ENCODE measurements at regions of chr12 and their contacts with region 1.

Region 1: DNA sequence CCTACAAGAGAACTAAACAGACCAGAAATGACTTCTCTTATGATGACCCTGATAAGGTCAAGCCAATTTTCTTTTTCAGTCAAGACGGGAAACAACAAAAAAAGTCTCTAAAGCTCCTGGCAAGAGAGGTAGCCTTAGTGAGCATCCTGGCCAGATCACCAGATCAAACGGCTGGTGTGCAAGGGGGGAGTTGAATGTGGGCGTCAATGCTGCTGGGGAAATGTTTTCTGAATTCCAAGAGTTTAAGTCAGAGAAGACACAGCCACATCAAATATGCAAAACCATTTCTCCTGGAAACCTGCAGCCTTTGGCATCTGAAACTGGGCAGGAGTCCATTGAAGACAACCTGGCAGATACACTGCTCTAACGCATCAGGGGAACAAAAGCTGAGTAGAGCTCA is 16.0 kb upstream of the SELPLG start:
- DNase-seq: no peak
- ATAC-seq: no peak
- H3K4me3 ChIP-seq: no peak overlapping the region
- H3K27ac ChIP-seq: no peak overlapping the region
- H3K4me1 ChIP-seq: peaks cover 13% of the 10 kb centered on the region
- H3K27me3 ChIP-seq: no peaks in the 10 kb centered on the region
- CTCF ChIP-seq: no peak

Region 2: DNA sequence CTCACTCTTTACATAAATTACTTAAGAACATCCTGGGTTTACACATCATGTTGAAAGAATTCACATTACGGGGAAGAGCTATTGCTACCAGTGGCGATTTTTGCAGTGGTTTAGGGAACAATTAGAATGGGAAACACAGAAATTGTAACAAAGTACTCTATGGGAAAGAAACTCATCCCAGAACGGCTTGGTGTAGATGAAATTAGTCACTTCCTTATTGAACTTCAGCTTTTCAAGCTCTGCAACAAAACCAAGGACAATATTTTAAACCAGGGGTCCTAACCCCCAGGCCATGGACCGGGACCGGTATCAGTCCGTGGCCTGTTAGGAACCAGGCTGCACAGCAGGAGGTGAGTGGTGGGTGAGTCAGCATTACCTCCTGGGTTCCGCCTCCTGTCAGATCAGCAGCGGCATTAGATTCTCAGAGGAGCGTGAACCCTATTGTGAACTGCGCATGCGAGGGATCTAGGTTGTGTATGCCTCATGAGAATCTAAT is 166.9 kb before region 1 on chr12:
- CTCF ChIA-PET with region 1: no interaction called
- POLR2A ChIA-PET with region 1: no interaction called
- in situ Hi-C with region 1: no loop called
- intact Hi-C with region 1: no loop called
- DNase-seq: peak; percentile 20
- ATAC-seq: peak; percentile 81
- H3K4me3 ChIP-seq: peak overlapping the region in 1 of 2 experiments; percentile 39; a peak in 2 of 4 replicates
- H3K27ac ChIP-seq: peak overlapping the region; percentile 73
- H3K4me1 ChIP-seq: peaks cover 17% of the 10 kb centered on the region
- H3K27me3 ChIP-seq: no peaks in the 10 kb centered on the region
- CTCF ChIP-seq: no peak

Region 3: DNA sequence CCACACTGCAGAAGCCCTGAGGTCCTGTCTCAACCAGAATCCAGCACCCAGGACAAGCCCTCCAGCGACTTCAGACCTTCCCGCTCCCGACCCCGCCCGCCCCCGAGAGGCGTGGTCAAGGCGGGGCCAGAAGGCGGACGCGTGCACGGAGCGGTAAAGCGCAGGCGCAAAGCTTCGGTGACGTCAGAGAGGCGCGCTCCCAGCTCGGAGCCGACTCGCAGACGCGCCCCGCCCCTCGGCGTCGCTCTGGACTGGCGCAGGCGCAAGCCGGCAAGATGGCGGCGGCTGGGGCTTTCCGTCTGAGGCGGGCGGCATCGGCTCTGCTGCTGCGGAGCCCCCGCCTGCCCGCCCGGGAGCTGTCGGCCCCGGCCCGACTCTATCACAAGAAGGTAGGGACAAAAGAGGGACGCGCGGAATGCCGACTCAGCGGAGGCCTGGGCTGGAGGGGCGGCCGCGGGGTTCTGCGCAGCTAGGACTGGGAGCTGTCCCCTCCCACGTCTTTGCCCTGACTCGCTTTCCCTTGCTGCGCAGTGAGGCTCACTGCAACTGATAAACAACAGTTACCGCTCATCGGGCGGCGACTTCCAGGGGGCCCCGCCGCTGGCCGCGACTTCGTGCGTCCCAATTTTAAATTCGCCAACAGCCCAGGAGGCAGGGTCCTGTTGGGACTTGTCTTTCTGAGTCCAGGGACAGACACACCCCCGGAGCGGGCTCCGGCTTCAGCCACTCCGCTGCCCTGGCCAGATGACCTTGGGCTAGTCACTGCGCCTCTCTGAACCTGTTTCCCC is 87.1 kb before region 1 on chr12 and contains the start of gene ISCU:
- CTCF ChIA-PET with region 1: no interaction called
- POLR2A ChIA-PET with region 1: no interaction called
- in situ Hi-C with region 1: no loop called
- intact Hi-C with region 1: no loop called
- DNase-seq: peak; percentile 77
- ATAC-seq: peak; percentile 89
- H3K4me3 ChIP-seq: peak within 1 kb of the TSS; percentile 100
- H3K27ac ChIP-seq: peak within 1 kb of the TSS; percentile 99
- H3K4me1 ChIP-seq: peaks cover 35% of the 10 kb centered on the region
- H3K27me3 ChIP-seq: no peaks in the 10 kb centered on the region
- CTCF ChIP-seq: no peak
- total RNA-seq, gene ISCU: 66.1 TPM

Region 4: DNA sequence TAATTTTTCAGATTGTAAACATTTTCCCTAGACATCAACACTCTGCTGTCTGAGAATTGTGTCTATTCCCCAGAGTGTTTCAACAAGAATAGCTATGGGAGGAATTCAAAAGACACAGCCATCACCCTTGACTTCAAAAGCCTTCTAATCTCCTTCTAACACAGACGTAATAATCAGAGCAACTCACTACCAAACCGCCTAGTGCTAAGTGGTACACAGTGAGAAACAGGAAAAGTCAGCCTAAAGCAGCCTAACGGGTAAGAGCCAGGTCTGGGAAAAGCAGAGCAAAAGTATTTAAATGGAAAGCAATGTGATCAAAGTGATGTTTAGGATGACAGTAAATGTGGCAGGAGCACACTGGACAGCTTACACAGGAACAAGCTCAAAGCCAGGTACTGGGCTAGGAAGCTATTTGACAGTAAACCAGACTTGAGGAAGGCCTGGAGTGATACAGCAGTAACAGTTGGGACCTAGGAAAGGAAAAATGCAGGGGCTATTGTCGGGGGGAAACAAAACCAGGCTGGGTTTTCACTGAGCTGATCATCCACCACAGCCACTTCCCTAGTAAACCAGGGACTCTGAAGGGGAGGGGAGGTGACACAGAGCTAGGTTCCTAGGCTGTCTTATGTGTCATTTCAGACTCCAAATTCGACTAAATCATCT is 52.2 kb after region 1 on chr12:
- CTCF ChIA-PET with region 1: interaction called, 10 read pairs
- POLR2A ChIA-PET with region 1: no interaction called
- in situ Hi-C with region 1: no loop called
- intact Hi-C with region 1: no loop called
- DNase-seq: no peak
- ATAC-seq: no peak
- H3K4me3 ChIP-seq: no peak overlapping the region
- H3K27ac ChIP-seq: no peak overlapping the region
- H3K4me1 ChIP-seq: no peaks in the 10 kb centered on the region
- H3K27me3 ChIP-seq: no peaks in the 10 kb centered on the region
- CTCF ChIP-seq: no peak

Region 5: DNA sequence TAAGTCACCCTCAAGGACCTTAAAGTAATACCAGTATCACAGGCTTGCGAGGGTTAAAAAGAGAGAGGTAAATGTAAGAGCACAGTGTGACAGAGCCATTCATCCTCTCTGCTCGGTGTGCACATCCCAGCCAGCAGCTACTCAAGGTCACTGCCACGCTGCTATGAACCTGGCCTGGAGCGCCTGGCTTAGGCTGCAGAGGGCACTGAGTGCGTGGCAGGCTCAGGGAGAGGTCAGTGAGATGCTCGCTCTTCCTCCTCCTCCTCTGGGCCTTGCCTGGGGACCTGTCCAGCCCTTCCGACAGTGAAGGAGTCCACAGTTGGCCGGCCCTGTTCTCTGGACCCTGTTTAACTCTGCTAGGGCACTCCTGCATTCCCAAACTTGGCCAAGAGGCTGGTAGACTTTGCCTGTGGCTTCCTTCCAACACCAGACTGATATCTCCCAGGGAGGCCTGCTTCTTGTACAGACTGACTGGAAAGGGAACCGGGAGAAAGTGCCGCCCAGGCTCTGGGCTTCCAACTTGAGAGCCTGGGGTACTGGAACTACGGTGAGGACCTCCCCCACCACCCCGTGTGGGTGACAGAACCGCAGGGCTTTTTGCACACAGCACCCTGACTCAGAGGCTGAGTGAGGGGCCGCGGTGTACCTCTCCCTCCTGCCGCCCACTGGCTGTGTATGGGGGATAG is 144.2 kb after region 1 on chr12:
- CTCF ChIA-PET with region 1: no interaction called
- POLR2A ChIA-PET with region 1: interaction called, 11 read pairs
- in situ Hi-C with region 1: no loop called
- intact Hi-C with region 1: no loop called
- DNase-seq: no peak
- ATAC-seq: peak; percentile 60
- H3K4me3 ChIP-seq: no peak overlapping the region
- H3K27ac ChIP-seq: no peak overlapping the region
- H3K4me1 ChIP-seq: no peaks in the 10 kb centered on the region
- H3K27me3 ChIP-seq: no peaks in the 10 kb centered on the region
- CTCF ChIP-seq: no peak

Measured in Panc1 (cell line).